ENCODE measurements at regions of chr1 and their contacts with region 1.

Region 1: GRCh38 chr1:228921481-228921880 is 186.2 kb downstream of the RHOU start:
- DNase-seq: peak; percentile 61 to 67
- ATAC-seq: no peak
- H3K4me3 ChIP-seq: no peak overlapping the region
- H3K27ac ChIP-seq: no peak overlapping the region
- H3K4me1 ChIP-seq: peaks cover 0 to 4% of the 10 kb centered on the region in 2 donors
- H3K27me3 ChIP-seq: no peaks in the 10 kb centered on the region

Region 2: DNA sequence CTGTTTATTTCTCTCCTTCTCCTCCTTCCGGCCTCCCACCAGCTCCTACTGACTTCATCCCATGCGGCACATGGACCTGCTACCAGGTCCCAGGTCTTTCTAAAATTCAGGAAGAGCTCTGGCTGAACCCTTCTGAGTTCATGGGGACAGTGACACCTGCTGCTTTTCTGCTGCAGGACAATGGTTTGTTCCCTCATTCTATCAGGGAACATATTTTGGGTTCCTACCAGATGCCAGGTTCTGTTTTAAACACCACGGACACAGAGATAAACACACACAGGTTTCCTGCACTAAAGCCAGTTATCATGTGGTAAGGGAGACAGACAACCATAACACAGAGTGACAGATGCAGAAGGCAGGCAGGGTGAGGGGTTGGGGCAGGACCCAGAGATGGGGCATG is 235.4 kb after region 1 on chr1:
- intact Hi-C with region 1: loop called in 1 of 2 experiments (anchors 10 kb)
- DNase-seq: no peak
- ATAC-seq: peak; percentile 79
- H3K4me3 ChIP-seq: no peak overlapping the region
- H3K27ac ChIP-seq: no peak overlapping the region
- H3K4me1 ChIP-seq: no peaks in the 10 kb centered on the region
- H3K27me3 ChIP-seq: no peaks in the 10 kb centered on the region

Region 3: GRCh38 chr1:229270547-229271447 is 349.3 kb after region 1 on chr1 and contains the start of gene RAB4A:
- intact Hi-C with region 1: no loop called
- DNase-seq: peak; percentile 92 to 96
- ATAC-seq: peak; percentile 95
- H3K4me3 ChIP-seq: peak within 1 kb of the TSS; percentile 98 to 100
- H3K27ac ChIP-seq: peak within 1 kb of the TSS; percentile 75 to 92
- H3K4me1 ChIP-seq: peaks cover 0 to 2% of the 10 kb centered on the region in 2 donors
- H3K27me3 ChIP-seq: no peaks in the 10 kb centered on the region
- total RNA-seq, gene RAB4A: 58.2 to 60.5 TPM

Measured in aorta (tissue), 5 donors.